Naive thymus-derived CD4-positive, alpha-beta T cell (primary cell): ENCODE measurements at regions of chr10 and their contacts with region 1.

Region 1: DNA sequence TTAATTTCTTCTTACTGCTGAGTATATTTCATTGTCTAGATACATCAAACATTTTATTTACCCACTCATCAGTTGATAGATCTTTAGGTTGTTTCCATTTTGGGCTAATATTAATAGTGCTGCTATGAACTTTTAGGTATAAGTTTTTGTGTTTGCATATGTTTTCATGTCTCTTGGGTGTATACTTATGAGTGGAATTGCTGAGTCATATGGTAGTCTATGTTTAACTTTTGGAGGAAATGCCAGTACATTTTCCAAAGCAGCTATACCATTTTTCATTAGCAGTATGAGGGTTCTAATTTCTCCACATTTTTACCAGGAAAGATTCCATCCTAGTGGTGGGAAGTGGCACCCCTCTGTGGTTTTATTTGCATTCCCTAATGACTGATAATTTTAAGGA is 101.1 kb downstream of the ANKRD30A start:
- DNase-seq: no peak
- ATAC-seq: no peak
- H3K4me3 ChIP-seq: no peak overlapping the region
- H3K4me3 Mint-ChIP-seq: no peak overlapping the region
- H3K27ac ChIP-seq: no peak overlapping the region
- H3K27ac Mint-ChIP-seq: no peak overlapping the region
- H3K4me1 ChIP-seq: no peaks in the 10 kb centered on the region
- H3K4me1 Mint-ChIP-seq: no peaks in the 10 kb centered on the region
- H3K27me3 ChIP-seq: no peaks in the 10 kb centered on the region
- H3K27me3 Mint-ChIP-seq: peaks cover 0 to 3% (median 0%) of the 10 kb centered on the region in 5 donors

Region 2: DNA sequence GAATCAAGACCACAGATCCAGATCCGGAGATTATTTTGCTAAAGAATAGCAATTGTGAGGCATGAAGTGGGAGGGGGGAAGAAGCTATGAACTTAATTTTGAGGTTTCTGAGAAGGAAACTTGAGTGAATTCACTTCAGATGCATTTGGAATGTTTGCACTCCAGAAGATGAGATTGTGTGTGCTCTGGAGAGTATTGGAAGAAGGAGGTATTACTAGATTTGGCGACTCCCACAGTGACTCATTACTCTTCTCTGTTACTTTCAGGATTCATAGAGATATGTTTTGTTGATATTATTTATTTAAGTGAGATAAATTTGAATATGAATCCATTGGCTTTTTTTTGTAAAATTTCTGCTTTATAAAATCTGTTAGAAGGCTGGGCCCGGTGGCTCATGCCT is 20.4 kb before region 1 on chr10:
- CTCF ChIA-PET with region 1: no interaction called
- POLR2A ChIA-PET with region 1: no interaction called
- intact Hi-C with region 1: loop called in 1 of 2 experiments (anchors 2 kb)
- DNase-seq: no peak
- ATAC-seq: no peak
- H3K4me3 ChIP-seq: no peak overlapping the region
- H3K4me3 Mint-ChIP-seq: no peak overlapping the region
- H3K27ac ChIP-seq: no peak overlapping the region
- H3K27ac Mint-ChIP-seq: no peak overlapping the region
- H3K4me1 ChIP-seq: no peaks in the 10 kb centered on the region
- H3K4me1 Mint-ChIP-seq: peaks cover 0 to 1% (median 0%) of the 10 kb centered on the region in 7 donors
- H3K27me3 ChIP-seq: no peaks in the 10 kb centered on the region
- H3K27me3 Mint-ChIP-seq: no peaks in the 10 kb centered on the region